Activated CD4-positive, alpha-beta T cell treated with anti-CD3 and anti-CD28 coated beads, Interleukin-2, amount 10 ng/mL, durations not matched to agents 24 days and 14 days (primary cell): ENCODE measurements at regions of chrX and their contacts with region 1.

Region 1: DNA sequence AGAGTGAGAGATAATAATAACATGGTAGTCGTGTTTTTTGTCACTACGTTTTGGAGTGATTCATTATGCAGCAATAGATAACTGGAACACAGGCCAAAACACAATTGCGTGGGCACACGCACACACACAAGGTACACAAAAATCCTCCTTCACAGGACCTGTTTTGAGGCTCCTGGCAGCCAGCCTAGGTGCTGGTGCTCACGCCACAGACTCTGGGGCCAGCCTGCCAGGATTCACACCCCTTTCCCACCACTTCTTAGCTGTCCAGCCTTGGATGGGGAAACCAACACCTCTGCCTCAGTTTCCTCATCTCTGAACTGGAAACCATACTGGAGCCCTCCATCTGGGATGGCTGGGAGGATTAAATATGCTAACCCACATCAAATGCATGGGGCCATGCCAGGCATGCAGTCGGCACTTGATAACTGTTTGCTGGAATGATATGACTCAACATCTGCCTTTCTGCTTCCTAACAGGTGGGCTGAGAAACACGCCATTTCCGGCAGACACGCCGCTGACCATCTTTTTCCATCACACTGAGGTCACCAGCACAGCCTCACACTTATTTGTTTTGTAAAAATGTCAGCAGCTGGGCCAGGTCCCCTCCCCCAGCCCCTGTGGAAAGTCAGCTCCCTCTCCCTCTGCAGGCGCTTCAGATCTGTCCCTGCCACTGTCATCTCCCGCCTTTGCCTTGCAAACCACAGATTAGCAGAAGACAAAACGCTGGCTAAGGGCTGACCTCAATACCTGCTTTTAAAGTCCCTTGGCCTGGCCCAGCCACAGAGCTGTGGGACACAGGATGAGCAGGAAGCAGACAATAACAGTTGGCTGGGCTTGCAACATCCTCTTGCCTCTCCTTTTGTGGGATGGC is 237.5 kb downstream of the BCOR start:
- DNase-seq: peak; percentile 92
- H3K4me3 Mint-ChIP-seq: peak overlapping the region; percentile 69
- H3K27ac Mint-ChIP-seq: peak overlapping the region; percentile 99
- H3K4me1 Mint-ChIP-seq: peaks cover 34% of the 10 kb centered on the region
- H3K27me3 Mint-ChIP-seq: no peaks in the 10 kb centered on the region

Region 2: GRCh38 chrX:38803586-38804431 is 1056.4 kb before region 1 on chrX:
- intact Hi-C with region 1: loop called (anchors 10 kb)
- DNase-seq: peak; percentile 93
- H3K4me3 Mint-ChIP-seq: peak overlapping the region; percentile 96
- H3K27ac Mint-ChIP-seq: peak overlapping the region; percentile 99
- H3K4me1 Mint-ChIP-seq: peaks cover 16% of the 10 kb centered on the region
- H3K27me3 Mint-ChIP-seq: no peaks in the 10 kb centered on the region

Region 3: DNA sequence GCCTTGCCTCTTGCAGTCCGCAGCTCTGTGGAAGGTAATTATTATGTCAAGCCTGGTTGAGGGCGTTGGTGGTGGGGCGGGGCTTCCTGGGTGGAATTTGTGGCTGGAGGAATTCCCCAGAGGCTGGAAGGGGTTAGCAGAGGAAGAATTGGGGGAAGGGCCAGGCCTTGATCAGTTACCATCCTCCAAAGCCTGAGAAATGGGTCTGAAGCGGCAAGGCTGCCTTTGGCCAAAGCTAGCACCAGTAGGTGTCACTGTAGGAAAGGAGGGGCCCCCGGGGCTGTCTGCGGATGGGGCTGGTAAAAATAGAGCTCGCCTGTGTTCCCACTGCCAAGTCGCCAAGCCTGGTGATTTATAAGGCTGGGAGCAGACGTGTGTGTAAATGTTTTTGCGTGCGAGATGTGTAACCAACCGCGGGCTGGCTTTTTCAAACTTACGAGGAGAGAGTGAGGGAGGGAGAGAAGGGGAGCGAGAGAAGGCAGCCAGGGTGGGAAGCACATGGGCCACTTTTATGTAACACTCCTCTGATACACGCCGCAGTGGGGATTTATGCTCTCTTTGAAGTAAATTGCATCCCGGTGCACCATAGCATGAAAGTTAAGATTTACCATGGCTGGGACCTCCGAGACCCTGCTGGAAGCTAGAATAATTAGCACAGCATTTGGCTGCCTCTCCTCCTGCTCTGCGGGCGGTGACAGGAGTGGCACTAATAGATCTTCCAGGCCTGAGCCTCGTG is 129.4 kb before region 1 on chrX:
- intact Hi-C with region 1: loop called (anchors 5 kb)
- DNase-seq: peak; percentile 85
- H3K4me3 Mint-ChIP-seq: peak overlapping the region; percentile 28
- H3K27ac Mint-ChIP-seq: peak overlapping the region; percentile 74
- H3K4me1 Mint-ChIP-seq: peaks cover 19% of the 10 kb centered on the region
- H3K27me3 Mint-ChIP-seq: no peaks in the 10 kb centered on the region

Region 4: DNA sequence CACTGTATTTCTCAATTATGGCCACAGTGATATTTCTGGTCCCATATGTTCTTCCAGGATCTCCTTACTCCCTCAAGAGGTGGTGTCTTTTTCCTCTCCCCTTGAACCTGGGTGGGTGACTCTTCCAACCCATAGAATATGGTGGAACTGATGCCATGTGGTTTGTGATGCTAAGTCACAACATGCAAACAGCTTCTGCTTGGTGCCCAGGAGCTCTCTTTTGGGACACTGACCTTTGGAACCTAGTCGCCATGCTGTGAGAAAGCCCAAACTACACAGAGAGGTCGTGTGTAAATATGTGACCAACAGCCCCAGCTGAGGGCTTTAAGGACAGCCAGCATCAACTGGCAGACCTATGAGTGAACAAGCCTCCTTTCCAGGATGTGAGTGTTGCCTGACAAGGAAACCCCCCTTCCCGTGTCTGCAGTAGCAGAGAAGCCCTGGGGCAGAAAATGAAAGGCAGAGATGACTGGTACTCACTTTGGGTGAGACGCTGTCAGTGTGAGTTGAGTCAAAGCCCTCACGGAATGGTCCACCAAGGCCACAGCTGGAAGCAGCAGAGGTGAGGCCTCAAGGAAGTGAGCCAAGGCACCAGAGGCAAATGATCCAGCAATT is 14.1 kb after region 1 on chrX:
- intact Hi-C with region 1: loop called (anchors 1 kb)
- DNase-seq: peak; percentile 87
- H3K4me3 Mint-ChIP-seq: peak overlapping the region; percentile 19
- H3K27ac Mint-ChIP-seq: peak overlapping the region; percentile 85
- H3K4me1 Mint-ChIP-seq: peaks cover 34% of the 10 kb centered on the region
- H3K27me3 Mint-ChIP-seq: peaks cover 3% of the 10 kb centered on the region

Region 5: DNA sequence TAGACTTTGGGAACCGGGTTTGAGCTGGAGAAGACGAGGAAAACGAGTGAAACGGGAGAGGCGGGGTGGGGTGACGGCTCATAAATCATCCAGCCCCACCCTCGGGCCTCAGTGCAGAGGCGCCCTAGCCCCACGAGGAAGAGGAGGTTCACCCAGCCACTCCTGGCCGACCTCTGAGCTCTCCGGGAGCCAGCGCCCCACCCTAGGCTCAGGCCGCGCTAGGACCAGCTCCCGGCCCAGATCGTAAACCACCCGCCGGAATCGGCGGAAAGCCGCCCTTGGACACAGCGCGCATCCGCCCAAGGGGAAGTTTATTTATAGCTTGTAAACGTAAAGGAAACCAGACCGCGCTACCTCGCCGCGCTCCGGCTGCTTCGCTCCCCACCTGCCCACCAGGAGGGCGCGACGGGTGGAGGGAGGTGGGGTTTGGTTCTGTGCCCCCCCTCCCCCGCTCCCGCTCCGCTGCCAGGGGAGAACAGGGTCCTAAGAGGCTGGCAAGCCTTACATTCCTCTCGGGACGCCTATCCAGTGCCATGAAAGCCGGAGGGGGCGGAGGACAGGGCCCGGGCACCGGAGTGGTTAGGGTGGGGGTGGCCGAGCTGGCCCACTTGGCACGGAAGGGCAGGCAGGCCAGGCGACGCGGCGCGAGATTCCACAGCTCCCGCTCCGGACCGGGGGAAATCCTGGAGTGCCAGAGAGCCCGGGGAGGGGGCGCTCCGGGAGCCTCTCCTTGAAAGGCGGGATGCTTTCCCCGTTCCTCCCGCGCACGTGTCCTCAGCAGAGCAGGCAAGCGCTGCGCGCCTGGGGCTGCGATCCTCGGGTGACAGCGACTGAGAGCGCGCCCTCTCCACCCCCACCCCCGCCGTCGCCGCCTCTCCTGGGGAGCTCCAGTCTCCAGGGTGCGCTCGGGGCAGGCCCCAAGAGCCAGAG is 153.3 kb after region 1 on chrX:
- intact Hi-C with region 1: loop called (anchors 1 kb)
- DNase-seq: peak; percentile 86
- H3K4me3 Mint-ChIP-seq: peak overlapping the region; percentile 80
- H3K27ac Mint-ChIP-seq: peak overlapping the region; percentile 88
- H3K4me1 Mint-ChIP-seq: peaks cover 18% of the 10 kb centered on the region
- H3K27me3 Mint-ChIP-seq: peaks cover 11% of the 10 kb centered on the region

Region 6: DNA sequence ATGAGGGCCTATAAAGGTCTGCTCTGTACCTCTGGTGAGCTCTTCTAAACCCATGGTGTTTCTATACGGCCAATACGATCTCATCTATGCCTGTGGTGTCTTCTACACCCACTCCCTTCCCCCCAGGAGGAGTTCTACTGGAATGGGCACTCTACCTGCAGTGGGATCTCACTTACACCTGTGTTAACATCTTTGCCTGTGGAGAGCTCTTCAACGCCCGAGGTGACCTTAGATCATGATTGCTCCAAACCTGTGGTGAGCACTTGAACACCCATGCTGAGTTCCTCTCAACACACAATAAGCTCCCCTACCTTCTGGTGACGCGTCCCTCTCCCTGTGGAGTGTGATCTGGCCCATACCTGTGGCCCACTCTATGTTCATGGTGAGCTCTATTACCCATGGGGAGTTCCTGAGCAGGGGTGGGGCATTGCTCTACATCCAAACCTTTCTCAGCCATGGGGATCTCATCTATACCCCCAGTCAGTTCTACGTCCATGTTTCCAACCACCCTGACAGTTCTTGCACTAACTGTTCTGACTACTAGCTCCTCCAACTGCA is 188.9 kb after region 1 on chrX:
- intact Hi-C with region 1: no loop called
- DNase-seq: no peak
- H3K4me3 Mint-ChIP-seq: no peak overlapping the region
- H3K27ac Mint-ChIP-seq: peak overlapping the region; percentile 25
- H3K4me1 Mint-ChIP-seq: no peaks in the 10 kb centered on the region
- H3K27me3 Mint-ChIP-seq: no peaks in the 10 kb centered on the region

Region 7: DNA sequence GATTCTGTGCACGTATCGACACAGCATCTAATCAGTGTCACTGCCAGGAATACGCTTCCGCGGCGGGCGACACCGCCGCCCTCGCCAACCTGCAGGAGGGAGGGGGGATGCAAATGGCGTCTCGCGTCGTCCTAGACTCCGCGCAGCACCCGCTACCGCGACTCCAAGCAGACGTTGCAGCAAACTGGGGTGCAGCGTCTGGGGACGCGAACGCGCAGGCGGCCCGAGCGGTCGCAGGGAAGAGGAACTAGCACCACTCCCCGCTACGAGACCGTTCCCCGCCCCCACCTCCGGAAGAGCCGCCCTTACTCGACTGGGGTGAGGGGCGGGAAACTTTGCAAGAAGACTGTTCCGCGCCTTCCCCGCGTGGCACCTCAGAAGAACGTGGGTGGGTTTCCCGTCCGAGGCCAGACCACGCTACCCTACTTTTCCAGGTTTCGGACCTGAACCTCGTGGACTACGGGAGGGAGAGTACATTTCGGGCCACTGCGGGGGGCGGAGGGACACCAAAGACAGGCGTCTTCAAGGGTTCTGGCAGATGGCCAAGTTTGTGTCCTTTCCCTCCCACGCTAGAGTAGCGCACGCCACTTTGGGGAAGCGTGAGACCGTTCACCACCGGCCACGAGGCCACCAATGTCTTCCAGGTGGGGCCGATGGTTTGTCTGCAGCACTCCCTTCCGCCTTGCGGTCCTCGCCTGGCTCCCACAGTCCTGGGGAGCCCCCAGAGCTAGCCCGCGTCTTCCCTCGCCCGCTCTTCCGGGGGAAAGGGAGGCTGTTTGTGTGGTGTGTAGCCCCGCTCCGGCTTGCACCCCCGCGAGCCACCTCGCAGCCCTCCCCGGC is 315.5 kb after region 1 on chrX:
- intact Hi-C with region 1: loop called (anchors 1 kb)
- DNase-seq: peak; percentile 92
- H3K4me3 Mint-ChIP-seq: peak overlapping the region; percentile 93
- H3K27ac Mint-ChIP-seq: peak overlapping the region; percentile 99
- H3K4me1 Mint-ChIP-seq: peaks cover 25% of the 10 kb centered on the region
- H3K27me3 Mint-ChIP-seq: no peaks in the 10 kb centered on the region